GM18951 (cell line): ENCODE measurements at regions of chr12 and their contacts with region 1.

Region 1: DNA sequence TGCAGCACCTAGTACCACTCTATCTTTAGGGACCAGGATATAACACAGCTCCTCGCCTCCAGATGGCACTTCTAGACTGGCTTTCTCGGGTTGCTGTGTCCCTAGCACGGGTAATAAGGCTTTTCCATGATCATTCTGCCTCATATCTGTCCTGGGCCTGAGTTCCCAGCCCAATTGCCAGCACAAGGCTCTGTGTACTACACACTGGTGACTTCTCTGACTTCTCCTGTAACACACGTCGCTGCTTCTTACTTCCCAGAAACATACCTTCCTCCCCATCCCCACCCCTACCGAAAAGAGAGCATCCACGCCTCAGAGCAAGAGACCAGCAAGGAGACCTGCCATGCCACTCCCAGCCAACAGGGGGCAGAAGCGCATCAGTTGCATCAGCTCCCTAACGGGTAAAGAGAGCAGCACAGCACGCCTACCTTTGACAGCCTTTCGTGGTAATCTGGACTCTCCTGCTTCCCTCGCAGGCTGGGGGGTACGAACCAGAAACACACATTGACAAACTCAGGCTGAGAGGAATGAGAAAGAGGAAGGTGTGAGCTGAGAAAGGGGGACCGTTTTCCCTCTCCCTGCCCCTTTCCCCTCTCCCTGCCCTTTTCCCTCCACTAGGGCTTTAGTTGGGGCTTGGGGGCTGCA is 21.2 kb upstream of the ZNF740 start:
- POLR2A ChIP-seq: no peak

Region 2: DNA sequence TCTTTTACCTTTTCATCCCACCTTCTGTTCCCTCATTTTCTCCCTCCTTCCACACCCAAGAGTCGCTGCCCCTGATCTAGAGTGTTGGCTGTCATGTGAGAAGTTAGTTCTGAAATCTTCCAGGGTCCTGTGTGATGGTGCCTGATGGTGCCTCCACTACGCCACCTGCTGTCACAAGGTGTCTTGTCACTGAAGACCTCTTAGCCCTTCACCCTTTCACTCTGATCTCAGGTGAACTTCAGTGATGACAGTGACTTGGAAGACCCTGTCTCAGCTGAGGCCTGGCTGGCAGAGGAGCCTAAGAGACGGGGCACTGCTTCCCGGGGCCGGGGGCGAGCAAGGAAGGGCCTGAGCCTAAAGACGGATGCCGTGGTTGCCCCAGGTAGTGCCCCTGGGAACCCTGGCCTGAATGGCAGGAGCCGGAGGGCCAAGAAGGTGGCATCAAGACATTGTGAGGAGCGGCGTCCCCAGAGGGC is 128.5 kb after region 1 on chr12:
- in situ Hi-C with region 1: loop called (anchors 10 kb)
- POLR2A ChIP-seq: no peak

Region 3: DNA sequence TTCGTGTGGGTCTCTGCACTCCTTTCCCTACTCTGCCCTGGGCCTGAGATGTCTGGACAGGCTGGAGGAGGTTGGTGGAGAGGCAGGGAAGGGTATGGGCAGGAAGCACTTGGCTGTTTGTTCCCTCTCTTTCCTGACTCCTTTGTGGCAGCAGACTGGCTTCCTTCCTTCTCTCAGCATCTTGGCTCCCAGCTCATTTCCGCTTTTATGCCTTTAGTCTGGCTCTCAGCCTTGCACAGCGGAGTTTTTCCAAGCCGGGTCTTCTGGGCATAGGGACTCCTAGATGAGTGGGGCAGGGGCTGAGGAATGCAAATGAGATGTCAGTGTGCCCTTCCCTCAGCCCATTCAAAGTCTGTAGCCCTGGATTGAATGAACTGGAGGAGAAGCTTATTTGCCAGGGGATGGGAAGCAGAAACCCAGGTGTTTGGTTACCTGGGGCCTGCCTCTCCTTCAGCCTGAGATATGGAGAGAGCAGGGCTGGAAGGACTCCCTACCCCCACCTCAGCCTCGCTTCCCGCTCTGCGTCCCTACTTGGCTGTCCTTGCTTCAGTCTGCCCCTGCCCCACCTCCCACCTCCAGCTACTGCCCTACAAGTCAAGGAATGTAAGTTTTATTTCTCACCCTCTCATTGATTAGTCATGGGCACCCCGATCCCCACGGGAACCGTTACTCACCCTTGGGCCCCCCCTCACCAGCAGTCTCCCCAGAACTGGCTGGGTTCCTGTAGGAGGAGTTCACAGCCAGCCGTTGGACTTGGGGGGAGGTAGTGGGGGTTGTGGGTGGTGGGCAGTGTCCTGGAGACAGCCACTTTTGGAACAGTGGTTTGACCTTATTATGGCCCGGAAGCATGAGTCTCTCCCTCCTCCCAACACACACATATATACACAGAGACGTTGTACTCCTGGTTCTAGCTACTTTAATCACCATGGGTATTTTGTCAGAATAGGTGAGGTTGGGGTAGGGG is 1269.0 kb after region 1 on chr12:
- in situ Hi-C with region 1: no loop called
- POLR2A ChIP-seq: no peak